Right cardiac atrium (tissue), 5 donors: ENCODE measurements at regions of chr12 and their contacts with region 1.

Region 1: GRCh38 chr12:49776413-49776812 is 35.1 kb downstream of the TMBIM6 start:
- DNase-seq: peak; percentile 75 to 89 (median 84)
- ATAC-seq: peak; percentile 90
- H3K4me3 ChIP-seq: no peak overlapping the region
- H3K27ac ChIP-seq: no peak overlapping the region
- H3K4me1 ChIP-seq: no peaks in the 10 kb centered on the region
- H3K27me3 ChIP-seq: no peaks in the 10 kb centered on the region

Region 2: DNA sequence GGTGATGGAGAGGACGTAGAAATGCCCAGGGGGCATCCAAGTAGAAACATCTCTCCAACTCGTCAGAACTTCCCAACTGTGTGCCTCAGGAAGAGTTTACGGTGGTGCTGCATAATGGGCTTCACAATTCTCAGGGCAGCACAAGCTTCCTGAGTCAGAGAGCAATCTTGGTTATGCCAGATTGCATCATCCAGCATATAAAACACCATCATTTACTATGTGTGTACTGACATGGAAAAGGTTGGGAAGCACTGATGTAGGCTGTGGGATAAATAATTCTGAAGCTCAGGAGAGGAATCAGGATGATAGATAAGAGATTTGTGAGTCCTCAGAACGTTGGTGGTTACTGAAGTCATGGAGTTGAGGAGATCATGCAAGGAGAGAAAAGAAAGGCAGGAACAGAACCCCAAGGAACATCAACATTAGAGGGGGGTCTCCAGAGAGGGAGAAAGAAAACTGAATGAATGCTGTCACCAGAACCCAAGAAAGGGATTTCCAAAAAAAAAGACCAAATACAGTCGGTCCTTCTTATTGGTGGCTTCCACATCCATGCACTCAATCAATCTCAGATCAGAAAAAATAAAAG is 56.5 kb after region 1 on chr12:
- intact Hi-C with region 1: loop called in 3 of 4 experiments (anchors 2 to 5 kb)
- DNase-seq: no peak
- ATAC-seq: no peak
- H3K4me3 ChIP-seq: no peak overlapping the region
- H3K27ac ChIP-seq: no peak overlapping the region
- H3K4me1 ChIP-seq: no peaks in the 10 kb centered on the region
- H3K27me3 ChIP-seq: no peaks in the 10 kb centered on the region

Region 3: GRCh38 chr12:49842519-49843352 is 66.3 kb after region 1 on chr12 and contains the start of gene BCDIN3D:
- intact Hi-C with region 1: loop called in 3 of 4 experiments (anchors 2 to 5 kb)
- DNase-seq: peak; percentile 94 to 97 (median 97)
- ATAC-seq: peak; percentile 97 to 98
- H3K4me3 ChIP-seq: peak within 1 kb of the TSS; percentile 69
- H3K27ac ChIP-seq: peak within 1 kb of the TSS; percentile 79
- H3K4me1 ChIP-seq: peaks cover 2% of the 10 kb centered on the region
- H3K27me3 ChIP-seq: no peaks in the 10 kb centered on the region
- total RNA-seq, gene BCDIN3D: 2.9 to 3.6 (median 3.2) TPM

Region 4: DNA sequence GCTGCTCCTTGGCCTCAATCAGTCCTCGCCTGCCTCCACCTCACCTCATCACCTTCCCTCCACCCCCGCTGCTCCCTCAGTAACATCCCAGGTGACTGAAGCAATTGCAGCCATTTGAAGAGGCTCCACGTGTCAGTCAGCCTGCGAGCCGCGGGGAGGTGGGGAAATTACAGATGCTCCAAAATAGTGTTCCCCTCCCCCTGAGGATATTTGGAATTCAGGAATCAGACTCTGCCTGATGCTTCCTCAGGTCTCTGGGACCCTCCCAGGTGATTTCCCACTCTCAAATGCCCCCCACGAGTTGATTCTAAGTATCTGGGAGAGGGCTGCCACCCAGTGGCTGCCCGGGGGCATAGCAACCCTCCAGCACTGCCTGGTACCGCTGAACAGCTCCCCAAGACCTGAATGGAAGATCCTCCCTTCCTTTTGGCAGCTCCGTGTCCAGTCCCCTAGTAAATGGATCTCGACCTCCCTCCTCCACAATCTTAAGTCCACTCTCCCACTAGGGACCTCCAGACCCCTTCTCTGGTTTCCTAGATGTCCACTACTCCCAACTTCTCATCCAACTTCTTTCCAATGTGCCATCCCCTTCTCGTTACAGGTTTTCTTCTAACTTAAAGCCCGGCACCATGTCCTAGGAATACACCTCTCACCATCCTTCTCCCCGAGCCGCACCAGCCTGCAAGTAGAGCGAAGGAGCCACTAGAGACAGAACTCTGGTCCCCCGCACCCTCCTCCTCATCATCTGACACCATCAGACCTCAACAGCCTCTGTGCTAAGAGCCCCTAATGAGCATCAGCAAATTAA is 279.6 kb after region 1 on chr12:
- intact Hi-C with region 1: loop called in 1 of 4 experiments (anchors 10 kb)
- DNase-seq: peak in 1 of 3 donors; percentile 74
- ATAC-seq: peak; percentile 30 to 54
- H3K4me3 ChIP-seq: no peak overlapping the region
- H3K27ac ChIP-seq: no peak overlapping the region
- H3K4me1 ChIP-seq: no peaks in the 10 kb centered on the region
- H3K27me3 ChIP-seq: no peaks in the 10 kb centered on the region

Region 5: GRCh38 chr12:50074936-50075807 is 298.8 kb after region 1 on chr12:
- intact Hi-C with region 1: loop called in 1 of 4 experiments (anchors 5 kb)
- DNase-seq: peak; percentile 85 to 93 (median 93)
- ATAC-seq: peak; percentile 83 to 85
- H3K4me3 ChIP-seq: no peak overlapping the region
- H3K27ac ChIP-seq: no peak overlapping the region
- H3K4me1 ChIP-seq: no peaks in the 10 kb centered on the region
- H3K27me3 ChIP-seq: no peaks in the 10 kb centered on the region